H1 (cell line): ENCODE measurements at regions of chr18 and their contacts with region 1.

Region 1: GRCh38 chr18:46481048-46481846 is 175.8 kb downstream of the LOXHD1 start:
- DNase-seq: peak in 1 of 2 experiments; percentile 87
- H3K4me3 ChIP-seq: no peak overlapping the region
- H3K27ac ChIP-seq: no peak overlapping the region
- H3K4me1 ChIP-seq: peaks cover 5 to 15% (median 10%) of the 10 kb centered on the region in 4 experiments; a peak in 6 of 7 replicates
- H3K27me3 ChIP-seq: 0 out of 7 replicates have a peak, but pooled peaks cover 0 to 3% (median 0%) of the 10 kb centered on the region in 4 experiments
- CTCF ChIP-seq: peak; percentile 53 to 84 (median 83)
- EP300 ChIP-seq: no peak
- POLR2A ChIP-seq: no peak
- RAD21 ChIP-seq: peak; percentile 62 to 80

Region 2: GRCh38 chr18:46297124-46297523 is 184.1 kb before region 1 on chr18:
- CTCF ChIA-PET with region 1: no interaction called
- POLR2A ChIA-PET with region 1: no interaction called
- DNase-seq: no peak
- H3K4me3 ChIP-seq: no peak overlapping the region
- H3K27ac ChIP-seq: no peak overlapping the region
- H3K4me1 ChIP-seq: peaks cover 5 to 10% (median 9%) of the 10 kb centered on the region in 4 experiments
- H3K27me3 ChIP-seq: no peaks in the 10 kb centered on the region
- CTCF ChIP-seq: no peak
- EP300 ChIP-seq: no peak
- POLR2A ChIP-seq: no peak
- RAD21 ChIP-seq: no peak

Region 3: GRCh38 chr18:46411867-46412690 is 69.2 kb before region 1 on chr18:
- CTCF ChIA-PET with region 1: interaction called, 100 read pairs
- POLR2A ChIA-PET with region 1: no interaction called
- DNase-seq: no peak
- H3K4me3 ChIP-seq: no peak overlapping the region; a peak in 1 of 8 replicates
- H3K27ac ChIP-seq: no peak overlapping the region
- H3K4me1 ChIP-seq: peaks cover 20 to 38% (median 26%) of the 10 kb centered on the region in 4 experiments
- H3K27me3 ChIP-seq: no peaks in the 10 kb centered on the region; a peak in 2 of 7 replicates
- CTCF ChIP-seq: no peak
- EP300 ChIP-seq: no peak
- POLR2A ChIP-seq: no peak
- RAD21 ChIP-seq: no peak

Region 4: GRCh38 chr18:46445914-46446313 is 35.3 kb before region 1 on chr18:
- CTCF ChIA-PET with region 1: interaction called, 13 read pairs
- POLR2A ChIA-PET with region 1: no interaction called
- DNase-seq: no peak
- H3K4me3 ChIP-seq: no peak overlapping the region
- H3K27ac ChIP-seq: no peak overlapping the region
- H3K4me1 ChIP-seq: peaks cover 5 to 11% (median 7%) of the 10 kb centered on the region in 4 experiments
- H3K27me3 ChIP-seq: no peaks in the 10 kb centered on the region
- CTCF ChIP-seq: no peak
- EP300 ChIP-seq: no peak
- POLR2A ChIP-seq: no peak
- RAD21 ChIP-seq: peak in 1 of 2 experiments; percentile 28; a peak in 1 of 4 replicates

Region 5: DNA sequence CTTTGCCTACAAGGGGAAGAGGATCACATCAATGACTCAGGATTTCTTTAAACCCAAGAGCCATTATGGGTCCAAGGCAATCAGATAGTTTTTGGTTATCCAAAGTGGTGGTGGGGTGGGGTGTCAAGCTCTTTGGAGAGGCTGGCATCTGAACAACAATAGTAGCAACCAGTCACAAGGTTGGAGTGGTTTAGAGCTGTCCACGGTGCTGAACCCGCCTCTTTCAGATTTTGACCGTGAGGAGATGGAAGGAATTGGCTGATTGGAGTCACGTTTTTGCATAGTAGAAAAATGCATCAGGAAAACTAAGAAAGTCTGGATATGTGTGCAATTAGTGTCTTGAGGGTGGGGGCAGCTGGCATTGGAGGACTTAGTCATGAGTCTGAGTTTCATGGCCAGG is 15.9 kb after region 1 on chr18:
- CTCF ChIA-PET with region 1: interaction called, 10 read pairs
- POLR2A ChIA-PET with region 1: no interaction called
- DNase-seq: peak in 1 of 2 experiments; percentile 85
- H3K4me3 ChIP-seq: no peak overlapping the region
- H3K27ac ChIP-seq: no peak overlapping the region
- H3K4me1 ChIP-seq: peaks cover 0 to 2% (median 0%) of the 10 kb centered on the region in 4 experiments; a peak in 1 of 7 replicates
- H3K27me3 ChIP-seq: no peaks in the 10 kb centered on the region
- CTCF ChIP-seq: no peak
- EP300 ChIP-seq: no peak
- POLR2A ChIP-seq: no peak
- RAD21 ChIP-seq: peak in 1 of 2 experiments; percentile 13; a peak in 1 of 4 replicates

Region 6: DNA sequence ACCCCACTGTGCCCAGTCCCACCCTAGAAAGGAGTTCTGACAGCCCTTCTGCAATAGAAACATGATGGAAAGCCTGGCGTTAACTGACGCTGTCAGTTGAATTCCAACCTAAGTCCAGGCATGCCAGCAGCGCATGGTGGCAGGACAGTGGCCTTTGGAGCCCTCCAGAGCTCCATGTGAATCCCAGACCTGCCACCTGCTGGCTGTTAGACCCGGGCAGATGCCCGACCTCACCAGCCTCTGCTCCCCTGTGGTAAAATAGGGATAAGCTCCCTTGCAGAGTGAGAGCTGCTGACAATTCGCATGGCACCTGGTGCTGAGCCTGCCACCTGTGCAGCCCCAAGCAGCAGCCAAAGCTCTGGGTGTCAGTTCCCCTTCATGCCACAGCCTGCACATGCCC is 37.2 kb after region 1 on chr18:
- CTCF ChIA-PET with region 1: interaction called, 21 read pairs
- POLR2A ChIA-PET with region 1: no interaction called
- DNase-seq: no peak
- H3K4me3 ChIP-seq: no peak overlapping the region
- H3K27ac ChIP-seq: no peak overlapping the region
- H3K4me1 ChIP-seq: no peaks in the 10 kb centered on the region
- H3K27me3 ChIP-seq: no peaks in the 10 kb centered on the region; a peak in 2 of 7 replicates
- CTCF ChIP-seq: peak; percentile 26 to 63 (median 47)
- EP300 ChIP-seq: no peak
- POLR2A ChIP-seq: no peak
- RAD21 ChIP-seq: peak; percentile 52 to 73

Region 7: GRCh38 chr18:46772357-46772756 is 291.1 kb after region 1 on chr18:
- CTCF ChIA-PET with region 1: no interaction called
- POLR2A ChIA-PET with region 1: no interaction called
- DNase-seq: no peak
- H3K4me3 ChIP-seq: no peak overlapping the region
- H3K27ac ChIP-seq: no peak overlapping the region
- H3K4me1 ChIP-seq: peaks cover 5 to 17% (median 12%) of the 10 kb centered on the region in 4 experiments
- H3K27me3 ChIP-seq: no peaks in the 10 kb centered on the region
- CTCF ChIP-seq: peak in 2 of 3 experiments; percentile 6 to 31; a peak in 1 of 4 replicates
- EP300 ChIP-seq: no peak
- POLR2A ChIP-seq: no peak
- RAD21 ChIP-seq: peak; percentile 17 to 40; a peak in 3 of 4 replicates